ENCODE measurements at regions of chr5 and their contacts with region 1.

Region 1: DNA sequence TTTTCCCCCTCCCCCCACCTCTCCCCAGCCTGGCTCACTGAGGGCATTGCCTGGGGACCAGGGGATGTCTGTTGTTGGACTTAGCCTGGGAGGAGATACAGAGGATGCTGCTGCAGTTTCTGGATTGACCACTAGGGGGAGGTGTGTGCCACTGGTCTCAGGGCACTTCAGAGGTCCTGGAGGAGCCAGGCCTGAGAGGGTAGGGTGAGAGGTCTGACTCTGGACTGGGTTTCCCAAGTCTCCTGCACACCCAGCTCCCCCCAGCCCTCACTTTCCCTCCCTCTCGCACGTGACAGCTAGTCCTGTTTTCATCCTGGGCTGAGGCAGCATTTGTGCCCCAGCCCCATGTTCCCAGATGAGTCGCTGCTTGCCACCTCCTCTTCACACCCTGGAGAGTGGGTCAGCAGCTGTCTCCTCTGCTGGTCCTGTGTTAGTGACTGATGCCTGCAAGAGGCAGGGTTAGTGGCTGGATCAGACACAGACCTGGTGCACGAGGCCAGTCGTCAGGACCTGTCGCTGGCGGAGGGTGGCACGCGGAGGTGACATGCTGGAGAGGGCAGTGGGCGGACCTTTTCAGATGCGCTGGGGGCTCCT is 4.4 kb downstream of the IL3 start:
- DNase-seq: no peak
- ATAC-seq: peak; percentile 63

Region 2: DNA sequence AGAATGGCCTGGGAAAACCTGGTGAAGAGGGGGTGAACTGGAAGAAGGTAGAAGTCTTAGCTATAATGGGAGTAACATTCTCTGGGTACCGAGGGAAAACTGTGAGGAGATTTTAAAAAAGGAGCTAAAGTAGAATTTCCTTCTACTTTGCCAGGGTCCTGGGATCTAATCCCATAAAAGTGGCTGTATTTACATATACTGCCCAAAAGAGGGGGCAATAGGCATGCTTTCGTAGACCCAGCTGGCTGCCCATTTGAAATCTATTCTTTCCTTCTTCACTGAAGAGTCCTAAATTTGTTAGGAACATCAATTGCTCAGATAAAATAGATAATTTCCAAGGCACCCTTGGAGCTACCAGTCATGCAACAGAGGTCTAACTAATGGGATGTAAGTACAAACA is 641.8 kb before region 1 on chr5:
- intact Hi-C with region 1: loop called (anchors 10 kb)
- DNase-seq: no peak
- ATAC-seq: no peak

Region 3: DNA sequence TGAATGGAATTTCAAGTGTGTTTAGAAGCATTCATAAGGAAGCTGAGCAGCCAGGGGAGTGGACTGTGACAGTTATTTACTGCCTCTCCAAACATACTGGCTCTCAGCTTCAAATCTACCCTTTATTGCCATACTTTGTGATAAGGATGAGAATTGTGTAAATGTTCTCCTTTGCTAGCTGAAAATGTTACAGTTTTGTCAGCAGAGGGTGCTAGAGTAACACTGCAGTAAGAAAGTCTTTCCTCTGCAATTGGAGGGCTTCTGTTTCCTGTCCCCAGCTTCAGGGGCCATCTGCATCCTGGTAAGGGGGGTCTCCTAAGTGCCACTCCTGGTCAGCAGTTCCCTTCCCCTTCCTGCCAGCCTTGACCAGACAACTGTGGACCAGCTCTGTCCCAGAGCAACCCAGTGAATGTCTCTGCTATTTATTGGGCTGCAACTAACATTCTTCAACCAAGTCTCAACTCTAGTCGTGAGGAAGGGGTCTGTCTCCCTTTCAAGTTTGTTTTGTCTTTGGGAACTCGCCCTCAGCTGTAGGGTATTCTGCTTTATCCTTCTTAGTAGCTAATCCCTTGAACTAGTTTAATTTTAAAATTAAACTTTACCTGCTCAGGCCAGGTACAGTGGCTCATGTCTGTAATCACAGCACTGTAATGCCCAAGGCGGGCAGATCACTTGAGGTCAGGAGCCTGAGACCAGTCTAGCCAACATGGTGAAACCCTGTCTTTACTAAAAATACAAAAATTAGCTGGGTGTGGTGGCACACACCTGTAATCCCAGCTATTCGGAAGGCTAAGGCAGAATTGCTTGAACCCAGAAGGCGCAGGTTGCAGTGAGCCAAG is 475.1 kb before region 1 on chr5:
- intact Hi-C with region 1: loop called (anchors 2 kb)
- DNase-seq: no peak
- ATAC-seq: peak; percentile 62

Region 4: GRCh38 chr5:131996207-131997025 is 68.4 kb before region 1 on chr5:
- intact Hi-C with region 1: no loop called
- DNase-seq: no peak
- ATAC-seq: no peak

Region 5: DNA sequence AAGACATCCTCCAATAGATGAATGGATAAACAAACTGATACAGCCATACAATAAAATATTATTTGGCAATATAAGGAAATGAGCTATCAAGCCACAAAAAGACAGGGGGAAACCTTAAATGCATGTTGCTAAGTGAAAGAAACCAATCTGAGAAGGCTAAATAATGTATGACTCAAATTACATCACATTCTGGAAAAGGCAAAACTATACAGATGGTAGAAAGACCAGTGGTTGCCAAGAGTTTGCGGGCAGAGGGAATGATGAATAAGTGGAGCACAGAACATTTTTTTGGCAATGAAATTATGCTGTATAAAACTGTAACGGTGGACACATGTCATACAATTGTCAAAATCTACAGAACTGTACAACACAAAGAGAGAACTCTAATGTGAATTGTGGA is 72.1 kb after region 1 on chr5:
- intact Hi-C with region 1: loop called (anchors 5 kb)
- DNase-seq: no peak
- ATAC-seq: no peak

Region 6: GRCh38 chr5:132180134-132180745 is 115.4 kb after region 1 on chr5:
- intact Hi-C with region 1: loop called (anchors 10 kb)
- DNase-seq: no peak
- ATAC-seq: peak; percentile 42